Ascending aorta (tissue), 2 donors: ENCODE measurements at regions of chr15 and their contacts with region 1.

Region 1: DNA sequence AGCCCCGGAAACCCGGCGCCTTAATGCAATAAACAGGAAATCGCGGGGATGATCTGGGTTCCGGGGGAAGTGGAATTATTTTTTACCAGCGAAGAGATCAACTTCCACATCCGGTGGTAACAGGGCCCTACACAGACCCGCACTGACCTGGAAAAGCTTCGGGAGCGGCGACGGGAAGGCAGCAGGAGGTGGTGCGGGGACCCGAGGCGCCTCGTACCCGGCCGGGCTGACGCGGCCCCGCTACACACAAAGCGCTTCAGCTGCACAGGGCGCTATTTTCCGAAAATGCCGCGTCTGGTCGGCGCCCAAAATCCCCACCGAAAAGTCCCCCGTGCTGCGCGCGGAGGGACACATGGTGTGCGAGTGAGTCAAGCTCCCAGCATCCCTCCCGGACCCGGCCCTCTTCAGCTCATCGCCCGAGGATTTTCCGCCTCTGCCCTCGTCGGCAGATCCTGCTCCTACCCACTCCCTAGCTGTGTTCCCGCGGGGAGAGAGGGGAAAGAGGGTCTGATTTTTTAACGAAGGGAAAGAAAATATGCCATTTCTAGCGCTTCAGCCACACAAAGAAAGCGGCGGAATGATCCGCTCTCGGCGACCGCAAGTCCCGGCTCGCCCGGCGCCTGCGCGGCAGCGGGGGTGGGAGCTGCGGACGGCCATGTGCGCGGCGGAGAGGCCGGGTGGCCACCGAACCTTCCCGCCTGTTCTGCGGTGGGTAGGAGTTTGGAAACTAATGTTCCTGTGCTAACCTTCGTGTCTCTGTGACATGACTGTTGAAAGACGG is at the start of gene GABPB1:
- DNase-seq: peak; percentile 31 to 90
- H3K4me3 ChIP-seq: peak within 1 kb of the TSS; percentile 95 to 99
- H3K27ac ChIP-seq: peak within 1 kb of the TSS; percentile 99 to 100
- H3K4me1 ChIP-seq: peaks cover 12 to 36% of the 10 kb centered on the region in 2 donors
- H3K27me3 ChIP-seq: no peaks in the 10 kb centered on the region
- CTCF ChIP-seq: no peak
- total RNA-seq, gene GABPB1: 10.9 TPM

Region 2: GRCh38 chr15:49155110-49155833 is 1199.8 kb before region 1 on chr15 and contains the start of gene COPS2:
- intact Hi-C with region 1: loop called (anchors 2 kb)
- DNase-seq: peak; percentile 80 to 98
- H3K4me3 ChIP-seq: peak within 1 kb of the TSS; percentile 66 to 87
- H3K27ac ChIP-seq: peak within 1 kb of the TSS; percentile 82 to 84
- H3K4me1 ChIP-seq: peaks cover 0 to 6% of the 10 kb centered on the region in 2 donors
- H3K27me3 ChIP-seq: no peaks in the 10 kb centered on the region
- CTCF ChIP-seq: peak in 1 of 3 experiments; percentile 2
- total RNA-seq, gene COPS2: 56.0 TPM

Region 3: DNA sequence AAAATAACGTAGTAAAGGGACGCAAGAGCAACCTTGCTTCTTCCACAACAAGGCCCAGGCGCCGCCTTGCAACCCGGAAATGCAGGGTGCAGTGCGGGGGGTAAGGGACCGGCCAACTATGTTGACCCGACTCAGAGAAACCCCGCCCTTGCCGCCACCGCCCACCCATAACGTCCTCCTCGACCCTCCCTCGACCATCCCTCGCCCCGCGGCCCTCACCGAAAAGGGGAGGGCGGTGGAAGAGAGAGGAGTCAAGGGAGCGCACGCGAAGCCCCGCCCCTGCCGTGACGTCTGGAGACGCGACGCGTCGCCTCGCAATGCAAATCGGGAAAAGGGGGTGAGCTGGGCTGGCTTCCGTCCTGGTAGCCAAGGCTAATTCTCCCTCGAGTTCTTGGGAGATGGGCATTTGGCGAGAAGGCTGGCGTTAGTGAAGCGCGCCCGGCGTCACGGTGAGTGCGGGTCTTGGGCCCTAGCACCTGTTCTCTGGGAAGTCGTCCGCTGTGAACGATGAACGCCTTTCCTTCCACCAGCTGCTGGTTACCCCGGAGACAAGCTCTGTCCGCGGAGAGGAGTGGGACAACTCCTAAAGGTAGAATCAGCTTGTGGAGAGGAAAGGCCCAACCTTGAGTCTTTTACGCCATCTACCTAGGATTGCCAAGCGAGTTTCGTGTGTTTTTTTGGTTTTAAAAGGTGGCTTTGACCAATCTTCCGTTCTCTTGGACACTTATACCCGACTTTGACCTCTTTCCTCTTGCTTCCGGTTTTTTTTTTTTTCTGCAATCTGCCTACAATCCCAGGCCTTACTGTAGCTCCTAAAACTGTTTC is 69.2 kb after region 1 on chr15 and contains the start of gene USP8:
- intact Hi-C with region 1: loop called (anchors 1 kb)
- DNase-seq: peak; percentile 80 to 96
- H3K4me3 ChIP-seq: peak within 1 kb of the TSS; percentile 80 to 84
- H3K27ac ChIP-seq: peak within 1 kb of the TSS; percentile 86 to 90
- H3K4me1 ChIP-seq: peaks cover 0 to 8% of the 10 kb centered on the region in 2 donors
- H3K27me3 ChIP-seq: no peaks in the 10 kb centered on the region
- CTCF ChIP-seq: no peak
- total RNA-seq, gene USP8: 34.5 TPM